ENCODE measurements at regions of chr3 and their contacts with region 1.

Region 1: GRCh38 chr3:4950351-4950784 is 28.9 kb upstream of the BHLHE40 start:
- DNase-seq: no peak
- ATAC-seq: no peak
- H3K4me3 ChIP-seq: no peak overlapping the region
- H3K27ac ChIP-seq: no peak overlapping the region
- H3K4me1 ChIP-seq: no peaks in the 10 kb centered on the region
- H3K27me3 ChIP-seq: peaks cover 2% of the 10 kb centered on the region; the same call in 1 of the 2 replicates
- CTCF ChIP-seq: no peak
- POLR2A ChIP-seq: no peak
- RAD21 ChIP-seq: no peak

Region 2: DNA sequence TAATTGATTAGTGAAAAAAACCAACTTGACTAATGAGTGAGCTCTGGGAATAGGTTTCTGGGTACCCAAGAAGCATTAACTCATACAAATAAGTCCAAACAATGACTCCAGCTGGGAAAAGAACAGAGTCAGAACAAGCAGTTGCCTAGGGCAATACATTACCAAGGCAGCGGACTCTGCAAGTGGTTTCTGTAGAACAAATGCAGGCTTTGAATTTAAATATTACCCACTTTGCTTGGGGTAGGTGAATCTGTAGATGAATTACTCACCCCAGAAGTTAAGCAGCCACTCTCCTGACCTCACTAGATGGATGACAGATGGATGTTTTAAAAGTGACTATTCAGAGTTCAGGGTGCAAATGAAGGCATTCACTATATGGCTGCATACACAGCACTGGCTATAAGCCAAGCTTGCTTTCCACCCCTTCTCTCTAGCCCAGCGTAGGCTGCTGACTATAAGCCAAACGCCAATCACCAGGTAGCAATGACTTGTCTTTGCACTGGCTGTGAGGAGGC is 44.2 kb before region 1 on chr3:
- CTCF ChIA-PET with region 1: no interaction called
- POLR2A ChIA-PET with region 1: no interaction called
- dilution Hi-C with region 1: no loop called
- in situ Hi-C with region 1: loop called (anchors 10 kb)
- intact Hi-C with region 1: no loop called
- DNase-seq: peak; percentile 36
- ATAC-seq: no peak; the same call in 1 of the 2 replicates
- H3K4me3 ChIP-seq: no peak overlapping the region
- H3K27ac ChIP-seq: no peak overlapping the region
- H3K4me1 ChIP-seq: no peaks in the 10 kb centered on the region
- H3K27me3 ChIP-seq: peaks cover 1% of the 10 kb centered on the region; the same call in 1 of the 2 replicates
- CTCF ChIP-seq: no peak
- POLR2A ChIP-seq: no peak
- RAD21 ChIP-seq: no peak

Region 3: DNA sequence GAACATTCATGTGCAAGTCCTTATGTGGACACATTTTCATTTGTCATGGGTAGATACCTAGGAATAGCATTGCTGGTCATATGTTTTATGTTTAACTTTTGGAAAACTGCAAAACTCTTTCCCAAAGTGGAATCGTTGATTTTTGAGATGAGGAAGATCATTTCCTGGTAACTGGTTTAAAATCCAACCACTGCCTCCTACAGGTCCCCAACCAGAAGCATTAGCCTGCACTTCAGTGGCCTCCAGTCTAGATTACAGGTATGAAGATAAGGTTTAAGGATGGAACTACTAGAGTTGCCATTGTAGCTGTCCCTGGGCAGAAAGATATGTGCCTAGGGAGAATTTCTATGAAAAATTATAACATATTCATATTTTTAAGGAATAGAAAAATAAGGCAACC is 19.9 kb before region 1 on chr3:
- CTCF ChIA-PET with region 1: interaction called, 10 read pairs
- POLR2A ChIA-PET with region 1: no interaction called
- dilution Hi-C with region 1: no loop called
- in situ Hi-C with region 1: no loop called
- intact Hi-C with region 1: no loop called
- DNase-seq: no peak
- ATAC-seq: no peak
- H3K4me3 ChIP-seq: no peak overlapping the region
- H3K27ac ChIP-seq: no peak overlapping the region
- H3K4me1 ChIP-seq: no peaks in the 10 kb centered on the region
- H3K27me3 ChIP-seq: no peaks in the 10 kb centered on the region
- CTCF ChIP-seq: no peak
- POLR2A ChIP-seq: no peak
- RAD21 ChIP-seq: no peak

Region 4: DNA sequence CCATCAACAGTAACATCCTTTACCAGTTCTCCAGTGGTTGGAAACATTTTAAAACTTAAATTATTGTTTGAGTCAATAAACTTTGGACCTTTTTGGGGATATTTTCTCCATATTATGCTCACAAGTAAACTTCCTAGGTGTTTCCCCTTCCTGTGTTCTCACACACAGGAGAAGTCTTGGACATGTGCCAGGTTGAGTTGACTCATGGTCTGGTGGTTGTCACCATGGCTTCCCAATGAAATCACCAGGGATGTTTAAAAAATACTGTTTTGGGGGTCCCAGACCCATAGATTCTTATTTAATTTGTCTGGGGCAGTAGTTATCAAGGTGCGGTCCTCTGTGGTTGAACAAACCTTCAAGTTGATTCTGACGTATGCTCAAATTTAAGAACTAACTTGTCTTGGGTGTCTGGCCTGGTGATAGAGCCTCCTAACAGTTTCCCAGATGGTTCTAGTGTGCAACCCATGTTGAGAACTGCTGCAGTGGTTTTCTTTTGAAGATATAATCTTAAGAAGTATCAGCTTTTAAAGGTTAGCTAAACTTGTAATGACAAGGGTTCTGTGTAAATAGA is 528.9 kb after region 1 on chr3:
- CTCF ChIA-PET with region 1: no interaction called
- POLR2A ChIA-PET with region 1: no interaction called
- dilution Hi-C with region 1: no loop called
- in situ Hi-C with region 1: no loop called
- intact Hi-C with region 1: no loop called
- DNase-seq: no peak
- ATAC-seq: no peak
- H3K4me3 ChIP-seq: no peak overlapping the region
- H3K27ac ChIP-seq: no peak overlapping the region
- H3K4me1 ChIP-seq: no peaks in the 10 kb centered on the region
- H3K27me3 ChIP-seq: no peaks in the 10 kb centered on the region
- CTCF ChIP-seq: no peak
- POLR2A ChIP-seq: no peak
- RAD21 ChIP-seq: no peak